ENCODE measurements at regions of chr20 and their contacts with region 1.

Region 1: DNA sequence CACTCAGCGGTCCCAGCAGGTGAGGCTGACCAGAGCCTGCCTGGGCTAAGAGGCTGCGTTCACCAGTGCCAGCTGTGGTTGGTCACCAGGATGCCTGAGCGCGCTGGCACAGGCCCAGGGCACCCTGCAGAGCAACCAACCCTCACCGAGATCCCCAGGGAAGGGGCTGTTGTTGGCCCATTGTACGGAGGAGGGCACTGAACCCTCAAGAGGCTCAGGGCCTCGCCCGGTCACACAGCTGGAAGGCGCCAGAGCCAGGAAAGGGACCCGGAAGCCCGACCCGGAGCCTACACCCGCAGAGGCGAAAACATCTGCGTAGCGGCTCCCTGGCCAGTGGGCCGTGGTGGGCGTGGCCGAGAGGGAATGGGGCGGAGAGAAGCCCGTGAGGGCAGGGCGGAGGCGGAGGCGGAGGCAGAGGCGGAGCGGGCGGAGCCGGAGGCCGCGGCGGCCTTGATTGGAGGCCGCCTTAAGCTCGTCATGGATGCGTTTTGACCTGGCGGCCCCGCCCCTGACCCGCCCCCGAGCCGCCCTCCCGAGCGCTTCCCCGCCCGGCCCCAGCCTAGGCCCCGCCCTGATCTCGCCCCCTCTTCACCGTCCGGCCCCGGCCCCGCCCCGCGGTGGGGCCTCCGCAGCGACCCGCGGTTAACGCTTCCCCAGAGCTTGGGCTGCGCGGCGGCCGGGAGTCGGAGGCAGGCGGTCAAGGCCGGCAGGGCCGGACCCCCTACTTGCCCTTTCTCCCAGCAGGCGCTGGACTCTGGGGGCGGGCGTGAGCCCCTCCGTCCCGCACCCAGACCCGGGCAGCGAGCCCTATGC is 2.2 kb upstream of the MRGBP start:
- DNase-seq: peak; percentile 97
- H3K4me3 Mint-ChIP-seq: peak overlapping the region; percentile 86
- H3K27ac Mint-ChIP-seq: peak overlapping the region; percentile 97
- H3K4me1 Mint-ChIP-seq: peaks cover 39% of the 10 kb centered on the region
- H3K27me3 Mint-ChIP-seq: peaks cover 3% of the 10 kb centered on the region

Region 2: DNA sequence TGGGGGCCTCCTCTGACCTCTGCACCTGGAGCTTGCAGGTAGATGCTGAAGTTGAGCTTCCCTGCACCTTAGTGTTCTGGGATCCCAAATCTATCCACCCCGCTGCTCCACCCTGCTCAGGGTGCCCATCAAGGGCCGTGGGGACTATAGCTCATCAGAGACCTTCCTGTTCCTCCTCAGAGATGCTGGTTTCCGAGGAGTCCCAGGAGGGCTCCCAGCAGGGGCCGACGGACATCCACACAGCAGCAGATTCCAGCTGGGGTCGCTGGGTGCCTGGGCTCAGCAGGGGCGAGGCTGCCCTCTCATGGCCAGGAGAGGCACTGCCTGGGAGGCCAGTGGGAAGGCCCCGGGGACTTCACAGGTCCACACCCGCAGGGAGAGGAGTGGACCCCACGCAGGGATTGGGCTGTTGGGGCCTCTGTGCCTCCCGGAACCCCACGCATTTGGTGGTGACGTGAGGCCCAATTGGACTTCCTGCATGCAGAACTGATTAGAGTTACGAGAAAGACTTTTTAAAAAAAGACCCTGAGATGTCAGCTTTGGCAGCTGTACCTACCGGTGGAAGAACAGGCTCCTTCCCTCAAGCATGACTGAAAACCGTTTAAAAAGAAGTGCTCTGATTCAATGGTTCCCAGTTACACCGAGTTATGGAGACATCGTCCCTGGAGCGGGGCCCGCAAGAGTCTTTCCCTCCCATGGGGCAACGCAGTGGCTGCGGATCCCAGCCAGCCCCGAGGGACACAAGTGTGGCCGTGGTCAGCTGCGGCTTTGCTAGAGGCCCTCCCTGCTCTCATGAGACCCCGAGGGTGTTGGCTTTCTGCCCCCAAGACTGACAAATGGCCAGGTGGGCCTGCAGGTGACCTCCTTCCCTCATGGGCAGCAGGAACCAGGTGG is 177.1 kb before region 1 on chr20:
- CTCF ChIA-PET with region 1: interaction called, 10 read pairs
- POLR2A ChIA-PET with region 1: interaction called, 5 read pairs
- DNase-seq: peak; percentile 79
- H3K4me3 Mint-ChIP-seq: peak overlapping the region; percentile 52
- H3K27ac Mint-ChIP-seq: peak overlapping the region; percentile 98
- H3K4me1 Mint-ChIP-seq: peaks cover 44% of the 10 kb centered on the region
- H3K27me3 Mint-ChIP-seq: peaks cover 15% of the 10 kb centered on the region

Region 3: GRCh38 chr20:62642040-62642665 is 152.0 kb before region 1 on chr20 and contains the start of gene SLCO4A1:
- CTCF ChIA-PET with region 1: interaction called, 10 read pairs
- POLR2A ChIA-PET with region 1: interaction called, 19 read pairs
- DNase-seq: peak; percentile 91
- H3K4me3 Mint-ChIP-seq: peak within 1 kb of the TSS; percentile 83
- H3K27ac Mint-ChIP-seq: peak within 1 kb of the TSS; percentile 71
- H3K4me1 Mint-ChIP-seq: peaks cover 42% of the 10 kb centered on the region
- H3K27me3 Mint-ChIP-seq: peaks cover 5% of the 10 kb centered on the region
- total RNA-seq, gene SLCO4A1: 51.5 to 51.7 TPM

Region 4: GRCh38 chr20:62740286-62741141 is 53.6 kb before region 1 on chr20:
- CTCF ChIA-PET with region 1: interaction called, 5 read pairs
- POLR2A ChIA-PET with region 1: interaction called, 19 read pairs
- DNase-seq: peak; percentile 95
- H3K4me3 Mint-ChIP-seq: peak overlapping the region; percentile 63
- H3K27ac Mint-ChIP-seq: peak overlapping the region; percentile 95
- H3K4me1 Mint-ChIP-seq: peaks cover 56% of the 10 kb centered on the region
- H3K27me3 Mint-ChIP-seq: peaks cover 27% of the 10 kb centered on the region

Measured in activated CD4-positive, alpha-beta memory T cell treated with anti-CD3 and anti-CD28 coated beads, Interleukin-2, amount 10 ng/mL, durations not matched to agents 7 days and 5 days (primary cell).